Psoas muscle (tissue), 8 donors: ENCODE measurements at regions of chrX and their contacts with region 1.

Region 1: GRCh38 chrX:129637217-129638109 is 17.3 kb downstream of the APLN start:
- DNase-seq: peak; percentile 63 to 81
- ATAC-seq: peak; percentile 63 to 89 (median 84)
- H3K4me3 ChIP-seq: no peak overlapping the region
- H3K27ac ChIP-seq: no peak overlapping the region
- H3K4me1 ChIP-seq: no peaks in the 10 kb centered on the region
- H3K27me3 ChIP-seq: no peaks in the 10 kb centered on the region
- CTCF ChIP-seq: peak; percentile 90

Region 2: DNA sequence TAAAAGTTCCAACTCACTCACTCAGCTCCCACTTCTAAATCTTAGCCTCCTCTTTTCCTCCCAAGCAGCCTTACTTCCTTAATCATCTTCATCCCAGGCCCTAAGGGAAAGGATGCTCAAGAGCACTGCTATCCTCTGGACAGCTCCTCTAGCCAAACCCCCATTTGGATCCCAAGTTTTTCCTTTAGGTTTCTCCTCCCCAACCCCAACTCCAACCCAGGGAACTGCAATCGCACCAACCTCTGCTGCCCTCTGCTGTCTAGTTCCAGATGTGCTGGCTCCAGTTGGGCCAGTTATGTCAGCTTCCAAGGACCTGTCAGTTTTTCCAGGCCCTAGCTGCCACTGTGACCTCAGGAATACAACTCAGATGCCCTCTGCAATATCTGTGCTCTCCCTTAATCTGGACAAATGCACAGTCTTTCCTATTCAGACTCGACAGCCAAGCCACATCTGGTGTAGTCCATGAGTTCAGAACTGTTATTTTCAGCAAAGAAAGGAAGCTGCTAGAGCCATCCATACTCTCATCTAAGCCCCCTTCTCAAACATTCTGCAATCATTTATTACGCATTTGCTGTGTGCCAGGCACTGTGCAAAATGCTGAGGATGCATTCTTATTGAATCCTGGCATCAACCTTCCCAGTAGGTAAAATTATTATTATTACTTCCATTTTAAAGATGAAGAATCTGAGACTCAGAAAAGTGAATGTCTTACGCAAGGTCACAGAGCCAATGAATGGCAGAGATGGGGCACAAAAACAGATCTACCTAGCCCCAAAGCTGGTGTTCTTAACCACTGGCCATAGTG is 89.0 kb after region 1 on chrX:
- intact Hi-C with region 1: loop called (anchors 2 kb)
- DNase-seq: peak; percentile 56 to 73
- ATAC-seq: peak; percentile 76 to 86 (median 82)
- H3K4me3 ChIP-seq: no peak overlapping the region
- H3K27ac ChIP-seq: no peak overlapping the region
- H3K4me1 ChIP-seq: no peaks in the 10 kb centered on the region
- H3K27me3 ChIP-seq: no peaks in the 10 kb centered on the region
- CTCF ChIP-seq: peak; percentile 70

Region 3: GRCh38 chrX:129843459-129844306 is 206.2 kb after region 1 on chrX and contains the start of gene ZDHHC9:
- intact Hi-C with region 1: loop called in 1 of 2 experiments (anchors 10 kb)
- DNase-seq: peak; percentile 85 to 92
- ATAC-seq: peak; percentile 93 to 98 (median 95)
- H3K4me3 ChIP-seq: peak within 1 kb of the TSS; percentile 74
- H3K27ac ChIP-seq: peak within 1 kb of the TSS; percentile 75
- H3K4me1 ChIP-seq: no peaks in the 10 kb centered on the region
- H3K27me3 ChIP-seq: no peaks in the 10 kb centered on the region
- CTCF ChIP-seq: no peak
- total RNA-seq, gene ZDHHC9: 13.8 to 30.3 (median 17.6) TPM